Activated naive CD4-positive, alpha-beta T cell treated with anti-CD3 and anti-CD28 coated beads for 36 hours (primary cell): ENCODE measurements at regions of chr15 and their contacts with region 1.

Region 1: GRCh38 chr15:84600851-84601838 is at the start of gene ZSCAN2:
- DNase-seq: peak; percentile 97
- H3K4me3 Mint-ChIP-seq: peak within 1 kb of the TSS; percentile 90
- H3K27ac Mint-ChIP-seq: no peak within 1 kb of the TSS
- H3K4me1 Mint-ChIP-seq: peaks cover 62% of the 10 kb centered on the region
- H3K27me3 Mint-ChIP-seq: no peaks in the 10 kb centered on the region
- total RNA-seq, gene ZSCAN2: 5.3 to 5.6 TPM

Region 2: DNA sequence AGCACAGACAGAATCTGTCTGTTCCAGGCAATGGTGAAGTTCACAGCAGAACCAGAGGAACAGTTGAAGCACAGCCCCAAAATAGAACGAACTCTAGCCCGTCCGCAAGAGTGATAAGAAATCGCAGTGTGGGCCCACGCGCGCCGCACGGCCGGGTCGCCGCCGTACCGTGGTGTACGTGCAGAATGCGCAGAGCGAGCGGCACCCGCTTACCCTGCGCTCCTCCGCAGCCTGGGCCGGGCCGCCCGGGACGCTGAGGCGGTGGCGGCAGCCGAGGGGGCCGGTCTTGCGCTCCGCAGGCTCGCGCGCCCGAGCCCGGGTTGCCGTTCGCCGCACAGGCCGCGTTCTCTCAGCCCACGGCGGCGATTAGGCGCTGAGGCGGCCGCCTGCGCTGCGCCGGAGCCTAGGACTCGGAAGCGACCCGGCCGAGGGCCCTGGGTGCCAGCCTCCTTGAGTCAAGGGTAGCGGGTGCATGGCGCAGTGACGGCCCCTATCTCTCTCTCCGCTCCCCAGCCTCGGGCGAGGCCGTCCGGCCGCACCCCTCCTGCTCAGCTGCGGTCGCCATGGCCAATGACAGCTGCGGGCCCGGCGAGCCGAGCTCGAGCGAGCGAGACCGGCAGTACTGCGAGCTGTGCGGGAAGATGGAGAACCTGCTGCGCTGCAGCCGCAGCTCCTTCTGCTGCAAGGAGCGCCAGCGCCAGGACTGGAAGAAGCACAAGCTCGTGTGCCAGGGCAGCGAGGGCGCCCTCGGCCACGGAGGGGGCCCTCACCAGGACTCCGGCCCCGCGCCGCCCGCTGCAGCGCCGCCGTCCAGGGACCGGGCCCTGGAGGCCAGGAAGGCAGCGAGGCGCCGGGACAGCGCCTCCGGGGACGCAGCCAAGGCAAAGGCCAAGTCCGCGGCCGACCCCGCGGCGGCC is 32.4 kb after region 1 on chr15:
- CTCF ChIA-PET with region 1: interaction called, 9 read pairs
- intact Hi-C with region 1: loop called (anchors 1 kb)
- DNase-seq: peak; percentile 63
- H3K4me3 Mint-ChIP-seq: peak overlapping the region; percentile 94
- H3K27ac Mint-ChIP-seq: peak overlapping the region; percentile 93
- H3K4me1 Mint-ChIP-seq: peaks cover 46% of the 10 kb centered on the region
- H3K27me3 Mint-ChIP-seq: no peaks in the 10 kb centered on the region

Region 3: DNA sequence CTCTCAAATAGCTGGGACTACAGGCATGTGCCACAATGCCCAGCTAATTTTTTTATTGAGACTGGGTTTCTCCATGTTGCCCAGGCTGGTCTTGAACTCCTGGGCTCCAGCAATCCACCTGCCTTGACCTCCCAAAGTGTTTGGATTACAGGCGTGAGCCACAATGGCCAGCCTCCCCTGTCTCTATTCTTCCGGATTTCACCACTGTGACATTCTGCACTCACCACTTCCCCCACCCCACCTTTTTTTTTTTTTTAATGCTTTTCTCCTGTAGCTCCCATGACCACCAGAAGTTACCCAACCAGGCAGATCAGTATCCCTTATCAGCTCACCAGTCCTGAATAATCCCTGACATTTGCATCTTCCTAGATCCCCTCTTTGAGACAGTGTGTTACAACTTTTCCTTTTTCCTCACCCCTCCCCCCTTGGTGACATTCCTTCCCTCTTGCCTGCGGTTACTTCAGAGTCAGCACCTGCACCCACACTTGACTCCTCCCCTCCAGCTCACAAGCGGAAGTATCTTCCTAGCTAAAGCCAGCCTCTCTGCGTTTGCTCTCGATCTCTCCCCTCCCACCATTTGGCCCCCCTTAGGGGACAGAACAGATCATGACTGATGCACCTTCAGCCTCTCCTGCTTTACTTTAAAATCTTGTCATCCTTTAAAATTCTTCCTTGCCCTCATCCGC is 133.8 kb after region 1 on chr15:
- CTCF ChIA-PET with region 1: interaction called, 3 read pairs
- intact Hi-C with region 1: loop called (anchors 5 kb)
- DNase-seq: peak; percentile 90
- H3K4me3 Mint-ChIP-seq: peak overlapping the region; percentile 73
- H3K27ac Mint-ChIP-seq: peak overlapping the region; percentile 95
- H3K4me1 Mint-ChIP-seq: peaks cover 49% of the 10 kb centered on the region
- H3K27me3 Mint-ChIP-seq: no peaks in the 10 kb centered on the region

Region 4: GRCh38 chr15:84818261-84819131 is 217.4 kb after region 1 on chr15:
- CTCF ChIA-PET with region 1: no interaction called
- intact Hi-C with region 1: loop called (anchors 5 kb)
- DNase-seq: peak; percentile 40
- H3K4me3 Mint-ChIP-seq: no peak overlapping the region
- H3K27ac Mint-ChIP-seq: no peak overlapping the region
- H3K4me1 Mint-ChIP-seq: peaks cover 8% of the 10 kb centered on the region
- H3K27me3 Mint-ChIP-seq: peaks cover 14% of the 10 kb centered on the region

Region 5: GRCh38 chr15:84883433-84883832 is 282.3 kb after region 1 on chr15:
- CTCF ChIA-PET with region 1: interaction called, 5 read pairs
- intact Hi-C with region 1: loop called (anchors 1 kb)
- DNase-seq: no peak
- H3K4me3 Mint-ChIP-seq: no peak overlapping the region
- H3K27ac Mint-ChIP-seq: no peak overlapping the region
- H3K4me1 Mint-ChIP-seq: no peaks in the 10 kb centered on the region
- H3K27me3 Mint-ChIP-seq: no peaks in the 10 kb centered on the region

Region 6: GRCh38 chr15:85073556-85074194 is 472.5 kb after region 1 on chr15:
- CTCF ChIA-PET with region 1: no interaction called
- intact Hi-C with region 1: loop called (anchors 1 kb)
- DNase-seq: peak; percentile 64
- H3K4me3 Mint-ChIP-seq: no peak overlapping the region
- H3K27ac Mint-ChIP-seq: peak overlapping the region; percentile 74
- H3K4me1 Mint-ChIP-seq: peaks cover 22% of the 10 kb centered on the region
- H3K27me3 Mint-ChIP-seq: no peaks in the 10 kb centered on the region